ENCODE measurements at regions of chr6 and their contacts with region 1.

Region 1: GRCh38 chr6:144675231-144675861 is 390.2 kb downstream of the UTRN start:
- DNase-seq: no peak
- ATAC-seq: peak; percentile 46
- H3K4me3 ChIP-seq: no peak overlapping the region
- H3K4me3 Mint-ChIP-seq: peak overlapping the region in 2 of 10 donors; percentile 32 to 60
- H3K27ac ChIP-seq: no peak overlapping the region
- H3K27ac Mint-ChIP-seq: peak overlapping the region in 5 of 9 donors; percentile 13 to 82 (median 63)
- H3K4me1 ChIP-seq: no peaks in the 10 kb centered on the region
- H3K4me1 Mint-ChIP-seq: peaks cover 19 to 51% (median 35%) of the 10 kb centered on the region in 7 donors
- H3K27me3 ChIP-seq: no peaks in the 10 kb centered on the region
- H3K27me3 Mint-ChIP-seq: no peaks in the 10 kb centered on the region

Region 2: GRCh38 chr6:144602523-144603180 is 72.7 kb before region 1 on chr6:
- CTCF ChIA-PET with region 1: no interaction called
- POLR2A ChIA-PET with region 1: no interaction called
- intact Hi-C with region 1: loop called in 1 of 2 experiments (anchors 5 kb)
- DNase-seq: peak in 1 of 9 donors; percentile 9
- ATAC-seq: no peak
- H3K4me3 ChIP-seq: no peak overlapping the region
- H3K4me3 Mint-ChIP-seq: peak overlapping the region in 9 of 10 donors; percentile 6 to 60 (median 32)
- H3K27ac ChIP-seq: no peak overlapping the region
- H3K27ac Mint-ChIP-seq: peak overlapping the region in 1 of 9 donors; percentile 20
- H3K4me1 ChIP-seq: peaks cover 3 to 15% of the 10 kb centered on the region in 2 donors
- H3K4me1 Mint-ChIP-seq: peaks cover 33 to 83% (median 65%) of the 10 kb centered on the region in 7 donors
- H3K27me3 ChIP-seq: no peaks in the 10 kb centered on the region
- H3K27me3 Mint-ChIP-seq: no peaks in the 10 kb centered on the region

Region 3: GRCh38 chr6:144710237-144710636 is 34.9 kb after region 1 on chr6:
- CTCF ChIA-PET with region 1: no interaction called
- POLR2A ChIA-PET with region 1: no interaction called
- intact Hi-C with region 1: no loop called
- DNase-seq: no peak
- ATAC-seq: no peak
- H3K4me3 ChIP-seq: no peak overlapping the region
- H3K4me3 Mint-ChIP-seq: no peak overlapping the region
- H3K27ac ChIP-seq: no peak overlapping the region
- H3K27ac Mint-ChIP-seq: no peak overlapping the region
- H3K4me1 ChIP-seq: no peaks in the 10 kb centered on the region
- H3K4me1 Mint-ChIP-seq: peaks cover 0 to 17% (median 4%) of the 10 kb centered on the region in 7 donors
- H3K27me3 ChIP-seq: no peaks in the 10 kb centered on the region
- H3K27me3 Mint-ChIP-seq: no peaks in the 10 kb centered on the region

Region 4: GRCh38 chr6:144726129-144726522 is 50.8 kb after region 1 on chr6:
- CTCF ChIA-PET with region 1: no interaction called
- POLR2A ChIA-PET with region 1: no interaction called
- intact Hi-C with region 1: loop called in 1 of 2 experiments (anchors 5 kb)
- DNase-seq: no peak
- ATAC-seq: peak; percentile 46
- H3K4me3 ChIP-seq: no peak overlapping the region
- H3K4me3 Mint-ChIP-seq: peak overlapping the region in 3 of 10 donors; percentile 13 to 57 (median 14)
- H3K27ac ChIP-seq: no peak overlapping the region
- H3K27ac Mint-ChIP-seq: peak overlapping the region in 8 of 9 donors; percentile 3 to 80 (median 37)
- H3K4me1 ChIP-seq: peaks cover 0 to 4% of the 10 kb centered on the region in 2 donors
- H3K4me1 Mint-ChIP-seq: peaks cover 22 to 54% (median 30%) of the 10 kb centered on the region in 7 donors
- H3K27me3 ChIP-seq: no peaks in the 10 kb centered on the region
- H3K27me3 Mint-ChIP-seq: no peaks in the 10 kb centered on the region

Measured in naive thymus-derived CD4-positive, alpha-beta T cell (primary cell).